Dendritic cell treated with granulocyte-macrophage colony-stimulating factor and Interleukin-4, amounts not matched to agents 40 ng/mL and 50 ng/mL, for 4 days (primary cell): ENCODE measurements at regions of chr1 and their contacts with region 1.

Region 1: DNA sequence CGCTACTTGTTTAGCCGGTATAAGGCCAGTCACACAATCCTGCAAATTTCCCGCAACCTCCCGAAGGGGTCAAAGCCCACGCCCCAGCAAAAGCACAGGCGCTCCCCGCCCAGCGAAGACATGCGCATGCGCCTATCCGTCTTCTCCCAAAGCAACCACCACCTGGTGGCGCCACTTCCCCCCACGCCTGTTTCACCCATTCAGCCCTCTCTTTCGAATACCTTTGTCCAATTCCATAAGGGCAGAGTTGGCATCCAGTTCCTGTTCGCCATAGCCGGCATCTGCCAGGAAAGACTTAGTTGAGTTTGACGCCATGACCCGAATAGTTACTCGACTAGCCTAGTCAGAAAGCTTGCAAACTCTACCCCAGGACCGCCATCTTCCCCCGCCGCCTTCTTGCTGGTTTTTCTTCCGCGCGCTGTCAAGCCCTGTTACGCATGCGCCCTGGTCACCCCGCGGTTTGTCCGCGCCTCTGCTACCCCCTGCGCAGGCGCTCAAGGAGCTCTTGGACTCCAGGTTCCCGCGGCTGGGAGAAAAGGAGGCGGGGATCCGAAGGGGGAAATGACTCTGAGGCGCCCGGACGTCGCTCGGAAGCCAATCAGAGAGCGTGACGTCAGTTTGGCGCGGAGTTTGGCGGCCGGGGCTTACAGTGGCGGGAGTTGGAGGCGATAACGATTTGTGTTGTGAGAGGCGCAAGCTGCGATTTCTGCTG is at the starts of genes DTL and INTS7:
- H3K4me3 Mint-ChIP-seq: peak within 1 kb of the TSS; percentile 93
- H3K27ac Mint-ChIP-seq: peak within 1 kb of the TSS; percentile 88
- H3K4me1 Mint-ChIP-seq: peaks cover 64% of the 10 kb centered on the region
- H3K27me3 Mint-ChIP-seq: no peaks in the 10 kb centered on the region

Region 2: GRCh38 chr1:211680752-211681327 is 354.4 kb before region 1 on chr1:
- intact Hi-C with region 1: loop called (anchors 1 kb)
- H3K4me3 Mint-ChIP-seq: no peak overlapping the region
- H3K27ac Mint-ChIP-seq: no peak overlapping the region
- H3K4me1 Mint-ChIP-seq: peaks cover 8% of the 10 kb centered on the region
- H3K27me3 Mint-ChIP-seq: peaks cover 7% of the 10 kb centered on the region

Region 3: DNA sequence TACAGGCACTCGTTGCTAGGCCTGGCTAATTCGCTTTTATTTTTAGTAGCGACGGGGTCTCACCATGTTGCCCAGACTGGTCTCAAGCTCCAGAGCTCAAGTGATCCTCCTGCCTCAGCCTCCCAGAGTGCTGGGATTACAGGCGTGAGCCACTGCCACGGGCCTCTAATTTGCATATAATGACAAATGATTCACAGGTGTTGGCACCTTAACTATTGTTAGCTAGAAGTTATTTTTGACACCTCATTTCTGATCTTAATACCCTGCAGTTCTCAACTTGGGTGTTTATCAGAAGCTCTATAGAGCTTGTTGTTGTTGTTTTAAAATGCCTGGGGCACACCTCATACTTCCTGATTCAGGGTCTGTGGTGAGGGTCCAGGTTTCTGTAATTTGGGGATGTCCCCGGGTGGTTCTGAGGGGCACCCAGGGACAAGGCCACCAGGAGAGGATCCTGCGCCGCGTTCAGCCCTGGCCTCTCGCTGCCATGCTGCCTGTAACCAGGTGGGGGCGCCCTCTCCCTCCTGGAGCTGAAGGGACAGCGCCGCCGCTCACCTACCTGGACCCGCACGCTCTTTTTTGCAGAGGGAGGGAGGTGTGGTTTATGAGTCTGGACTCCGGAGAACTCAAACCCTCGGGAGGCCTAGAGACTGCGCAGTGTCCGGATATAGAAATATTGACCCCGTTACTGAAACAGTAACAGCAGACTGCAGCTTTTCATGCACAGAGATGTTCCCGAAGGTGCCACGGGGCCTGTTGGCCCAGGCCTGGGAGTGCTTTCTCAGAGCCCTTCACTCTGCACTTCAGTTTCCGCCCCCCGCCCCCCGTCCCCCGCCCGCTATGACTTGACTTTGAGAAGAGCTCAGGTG is 336.9 kb before region 1 on chr1:
- intact Hi-C with region 1: loop called (anchors 5 kb)
- H3K4me3 Mint-ChIP-seq: peak overlapping the region; percentile 55
- H3K27ac Mint-ChIP-seq: no peak overlapping the region
- H3K4me1 Mint-ChIP-seq: peaks cover 15% of the 10 kb centered on the region
- H3K27me3 Mint-ChIP-seq: peaks cover 26% of the 10 kb centered on the region

Region 4: GRCh38 chr1:212012034-212012740 is 23.1 kb before region 1 on chr1:
- intact Hi-C with region 1: loop called (anchors 1 kb)
- H3K4me3 Mint-ChIP-seq: no peak overlapping the region
- H3K27ac Mint-ChIP-seq: no peak overlapping the region
- H3K4me1 Mint-ChIP-seq: no peaks in the 10 kb centered on the region
- H3K27me3 Mint-ChIP-seq: no peaks in the 10 kb centered on the region

Region 5: DNA sequence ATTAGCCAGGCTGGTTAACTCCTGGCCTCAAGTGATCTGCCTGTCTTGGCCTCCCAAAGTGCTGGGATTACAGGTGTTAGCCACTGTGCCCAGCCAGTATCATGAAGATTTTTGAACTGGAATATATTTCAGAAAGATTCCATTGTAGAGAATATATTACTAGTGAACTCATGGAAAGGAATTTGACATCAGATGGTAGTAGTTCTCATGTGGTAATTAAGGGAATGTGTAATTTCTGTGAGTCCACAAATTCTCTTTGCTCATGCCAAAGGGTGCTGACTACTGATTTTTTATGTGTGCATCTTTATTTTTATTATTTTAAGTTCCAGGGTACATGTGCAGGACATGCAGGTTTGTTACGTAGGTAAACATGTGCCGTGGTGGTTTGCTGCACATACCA is 10.7 kb after region 1 on chr1:
- intact Hi-C with region 1: no loop called
- H3K4me3 Mint-ChIP-seq: no peak overlapping the region
- H3K27ac Mint-ChIP-seq: no peak overlapping the region
- H3K4me1 Mint-ChIP-seq: peaks cover 2% of the 10 kb centered on the region
- H3K27me3 Mint-ChIP-seq: no peaks in the 10 kb centered on the region

Region 6: DNA sequence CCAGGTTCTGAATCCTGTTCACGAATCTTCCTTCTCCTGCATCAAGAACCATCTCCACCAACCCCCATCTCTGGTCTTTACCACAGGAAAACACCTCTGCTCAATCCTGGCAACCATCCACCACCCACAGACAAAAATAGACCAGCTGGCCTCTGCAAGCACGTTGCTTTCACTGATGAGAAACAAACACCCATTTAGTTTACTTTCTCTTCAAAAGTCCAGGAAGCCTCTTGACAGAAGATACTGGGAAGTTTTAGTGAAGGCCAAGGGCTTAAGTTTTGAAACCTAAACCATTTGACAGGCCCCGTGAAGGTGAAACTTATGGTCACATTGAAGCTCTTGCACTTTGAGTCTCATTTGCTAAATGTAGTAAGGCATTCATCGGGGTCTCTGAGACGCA is 127.4 kb after region 1 on chr1:
- intact Hi-C with region 1: no loop called
- H3K4me3 Mint-ChIP-seq: no peak overlapping the region
- H3K27ac Mint-ChIP-seq: no peak overlapping the region
- H3K4me1 Mint-ChIP-seq: peaks cover 6% of the 10 kb centered on the region
- H3K27me3 Mint-ChIP-seq: no peaks in the 10 kb centered on the region

Region 7: DNA sequence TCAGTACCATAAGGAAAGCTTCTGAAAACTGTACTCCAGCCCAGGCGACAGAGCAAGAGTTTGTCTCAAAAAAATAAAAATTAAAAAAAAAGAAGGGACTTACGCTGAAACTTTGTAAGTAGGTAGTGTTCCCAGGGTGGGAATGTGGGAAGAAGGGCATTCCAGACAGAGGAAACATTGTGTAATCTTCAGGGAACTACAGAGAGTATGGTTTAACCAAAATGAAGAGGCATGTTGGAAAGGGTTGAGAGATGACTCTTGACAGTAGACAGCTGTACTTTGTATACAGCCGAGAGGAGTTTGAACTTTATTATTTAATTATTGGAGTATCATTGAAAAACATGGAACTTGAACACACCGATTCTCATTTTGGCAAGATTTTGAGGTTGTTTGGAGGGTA is 293.0 kb after region 1 on chr1:
- intact Hi-C with region 1: no loop called
- H3K4me3 Mint-ChIP-seq: no peak overlapping the region
- H3K27ac Mint-ChIP-seq: no peak overlapping the region
- H3K4me1 Mint-ChIP-seq: no peaks in the 10 kb centered on the region
- H3K27me3 Mint-ChIP-seq: no peaks in the 10 kb centered on the region